WTC11 (cell line): ENCODE measurements at regions of chr19 and their contacts with region 1.

Region 1: DNA sequence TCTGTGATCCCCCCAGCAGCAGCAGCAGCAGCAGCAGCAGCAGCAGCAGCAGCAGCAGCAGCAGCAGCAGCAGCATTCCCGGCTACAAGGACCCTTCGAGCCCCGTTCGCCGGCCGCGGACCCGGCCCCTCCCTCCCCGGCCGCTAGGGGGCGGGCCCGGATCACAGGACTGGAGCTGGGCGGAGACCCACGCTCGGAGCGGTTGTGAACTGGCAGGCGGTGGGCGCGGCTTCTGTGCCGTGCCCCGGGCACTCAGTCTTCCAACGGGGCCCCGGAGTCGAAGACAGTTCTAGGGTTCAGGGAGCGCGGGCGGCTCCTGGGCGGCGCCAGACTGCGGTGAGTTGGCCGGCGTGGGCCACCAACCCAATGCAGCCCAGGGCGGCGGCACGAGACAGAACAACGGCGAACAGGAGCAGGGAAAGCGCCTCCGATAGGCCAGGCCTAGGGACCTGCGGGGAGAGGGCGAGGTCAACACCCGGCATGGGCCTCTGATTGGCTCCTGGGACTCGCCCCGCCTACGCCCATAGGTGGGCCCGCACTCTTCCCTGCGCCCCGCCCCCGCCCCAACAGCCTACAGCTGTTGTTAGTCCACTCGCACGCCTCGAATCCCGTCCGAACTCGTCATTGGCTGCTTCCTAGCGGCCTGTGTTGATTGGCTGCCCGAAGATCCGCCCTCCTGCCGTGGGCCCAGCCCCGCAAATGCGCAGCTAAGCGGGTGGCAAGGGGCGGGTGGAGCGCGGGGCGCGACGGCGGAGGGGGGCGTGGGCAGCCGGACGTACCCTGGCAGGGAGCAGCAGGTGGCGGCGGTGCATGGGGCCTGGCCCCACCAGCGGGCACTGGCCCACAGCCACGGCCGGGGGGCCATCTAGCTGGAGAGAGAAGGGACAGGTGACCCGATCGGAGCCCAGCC is 1.4 kb upstream of the SIX5 start:
- DNase-seq: peak; percentile 97
- ATAC-seq: peak; percentile 73
- H3K4me3 Mint-ChIP-seq: peak overlapping the region; percentile 97
- H3K27ac Mint-ChIP-seq: peak overlapping the region; percentile 97
- H3K4me1 Mint-ChIP-seq: peaks cover 13% of the 10 kb centered on the region
- H3K27me3 Mint-ChIP-seq: peaks cover 5% of the 10 kb centered on the region; the same call in 1 of the 2 replicates
- CTCF ChIP-seq: peak; percentile 98

Region 2: GRCh38 chr19:45670670-45671453 is 99.6 kb before region 1 on chr19:
- CTCF ChIA-PET with region 1: interaction called, 17 read pairs
- POLR2A ChIA-PET with region 1: interaction called, 3 read pairs
- DNase-seq: peak; percentile 98
- ATAC-seq: peak; percentile 90
- H3K4me3 Mint-ChIP-seq: peak overlapping the region; percentile 73
- H3K27ac Mint-ChIP-seq: no peak overlapping the region
- H3K4me1 Mint-ChIP-seq: peaks cover 27% of the 10 kb centered on the region
- H3K27me3 Mint-ChIP-seq: peaks cover 72% of the 10 kb centered on the region
- CTCF ChIP-seq: no peak

Region 3: DNA sequence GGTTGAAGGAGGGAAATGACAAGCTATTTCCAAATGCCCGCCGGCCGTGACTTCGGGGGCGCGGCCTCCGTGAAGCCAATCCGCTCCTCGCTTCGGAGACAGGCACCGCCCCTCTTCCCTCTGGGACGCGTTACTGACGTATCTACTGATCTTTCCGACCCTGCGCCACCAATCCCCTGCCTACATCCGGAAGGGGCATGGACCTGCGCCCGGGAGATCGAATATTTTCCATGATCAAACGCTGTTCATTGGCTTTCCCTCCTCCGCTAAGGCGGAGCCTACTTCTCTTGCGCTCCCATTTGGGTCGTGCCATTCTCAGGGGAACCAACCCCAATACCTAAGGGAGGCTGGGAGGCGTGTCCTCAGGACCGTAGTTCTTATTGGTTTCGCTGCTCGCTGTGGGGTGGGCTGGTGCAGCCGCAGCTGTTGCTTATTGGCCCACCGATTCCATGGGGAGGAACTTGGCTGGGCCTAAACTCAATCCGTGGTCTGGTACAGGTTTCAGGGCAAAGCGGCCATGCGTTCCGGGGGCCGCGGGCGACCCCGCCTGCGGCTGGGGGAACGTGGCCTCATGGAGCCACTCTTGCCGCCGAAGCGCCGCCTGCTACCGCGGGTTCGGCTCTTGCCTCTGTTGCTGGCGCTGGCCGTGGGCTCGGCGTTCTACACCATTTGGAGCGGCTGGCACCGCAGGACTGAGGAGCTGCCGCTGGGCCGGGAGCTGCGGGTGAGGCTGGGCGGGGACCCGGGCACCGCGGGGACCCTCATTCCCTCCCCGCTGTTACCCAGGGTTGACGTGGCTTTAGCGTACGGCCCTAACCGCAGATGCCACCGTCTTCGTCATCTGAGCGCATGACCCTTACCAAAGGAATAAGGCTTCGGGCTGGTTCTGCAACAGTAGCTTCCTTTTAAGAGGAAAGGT is 78.0 kb before region 1 on chr19 and contains the start of gene QPCTL:
- CTCF ChIA-PET with region 1: interaction called, 40 read pairs
- POLR2A ChIA-PET with region 1: interaction called, 39 read pairs
- DNase-seq: peak; percentile 97
- ATAC-seq: peak; percentile 95
- H3K4me3 Mint-ChIP-seq: peak within 1 kb of the TSS; percentile 96
- H3K27ac Mint-ChIP-seq: peak within 1 kb of the TSS; percentile 100
- H3K4me1 Mint-ChIP-seq: peaks cover 6% of the 10 kb centered on the region; the same call in 1 of the 2 replicates
- H3K27me3 Mint-ChIP-seq: peaks cover 3% of the 10 kb centered on the region; the same call in 1 of the 2 replicates
- CTCF ChIP-seq: no peak
- total RNA-seq, gene QPCTL: 23.8 to 33.3 TPM (median 27.5 TPM) in 3 replicates

Region 4: GRCh38 chr19:45717166-45717982 is 53.1 kb before region 1 on chr19:
- CTCF ChIA-PET with region 1: interaction called, 80 read pairs
- POLR2A ChIA-PET with region 1: interaction called, 115 read pairs
- DNase-seq: peak; percentile 99
- ATAC-seq: peak; percentile 98
- H3K4me3 Mint-ChIP-seq: peak overlapping the region; percentile 97
- H3K27ac Mint-ChIP-seq: peak overlapping the region; percentile 97
- H3K4me1 Mint-ChIP-seq: peaks cover 25% of the 10 kb centered on the region
- H3K27me3 Mint-ChIP-seq: no peaks in the 10 kb centered on the region; the same call in 1 of the 2 replicates
- CTCF ChIP-seq: no peak

Region 5: GRCh38 chr19:45753546-45753945 is 16.9 kb before region 1 on chr19:
- CTCF ChIA-PET with region 1: interaction called, 93 read pairs
- POLR2A ChIA-PET with region 1: interaction called, 20 read pairs
- DNase-seq: peak; percentile 73
- ATAC-seq: peak; percentile 95
- H3K4me3 Mint-ChIP-seq: no peak overlapping the region
- H3K27ac Mint-ChIP-seq: no peak overlapping the region
- H3K4me1 Mint-ChIP-seq: peaks cover 3% of the 10 kb centered on the region
- H3K27me3 Mint-ChIP-seq: peaks cover 12% of the 10 kb centered on the region
- CTCF ChIP-seq: no peak

Region 6: DNA sequence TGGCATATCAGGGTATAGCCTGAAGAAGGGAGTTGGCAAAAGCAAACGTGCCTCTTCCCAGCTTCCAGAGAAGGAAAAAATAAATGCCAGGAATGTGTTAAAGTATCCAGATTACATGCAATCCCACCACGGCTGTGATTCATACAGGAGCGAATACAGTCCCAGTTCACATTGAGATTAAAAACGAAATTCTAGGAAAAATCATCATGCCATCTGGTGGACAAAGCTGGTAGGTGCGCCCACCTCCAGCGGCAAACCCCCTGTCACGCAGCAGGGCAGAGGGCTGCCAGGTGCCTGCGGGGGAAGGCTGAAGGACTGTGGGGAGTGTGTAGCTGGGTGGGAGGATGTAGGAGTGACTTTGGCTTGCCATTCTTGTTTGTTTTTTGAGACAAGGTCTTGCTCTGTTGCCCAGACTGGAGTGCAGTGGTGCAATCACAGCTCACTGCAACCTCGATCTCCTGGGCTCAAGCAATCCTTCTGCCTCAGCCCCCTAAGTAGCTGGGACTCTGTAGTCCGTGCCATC is 28.6 kb after region 1 on chr19:
- CTCF ChIA-PET with region 1: interaction called, 73 read pairs
- POLR2A ChIA-PET with region 1: interaction called, 5 read pairs
- DNase-seq: peak; percentile 75
- ATAC-seq: peak; percentile 86
- H3K4me3 Mint-ChIP-seq: no peak overlapping the region; the same call in 1 of the 2 replicates
- H3K27ac Mint-ChIP-seq: no peak overlapping the region
- H3K4me1 Mint-ChIP-seq: peaks cover 6% of the 10 kb centered on the region
- H3K27me3 Mint-ChIP-seq: peaks cover 57% of the 10 kb centered on the region
- CTCF ChIP-seq: peak; percentile 71

Region 7: DNA sequence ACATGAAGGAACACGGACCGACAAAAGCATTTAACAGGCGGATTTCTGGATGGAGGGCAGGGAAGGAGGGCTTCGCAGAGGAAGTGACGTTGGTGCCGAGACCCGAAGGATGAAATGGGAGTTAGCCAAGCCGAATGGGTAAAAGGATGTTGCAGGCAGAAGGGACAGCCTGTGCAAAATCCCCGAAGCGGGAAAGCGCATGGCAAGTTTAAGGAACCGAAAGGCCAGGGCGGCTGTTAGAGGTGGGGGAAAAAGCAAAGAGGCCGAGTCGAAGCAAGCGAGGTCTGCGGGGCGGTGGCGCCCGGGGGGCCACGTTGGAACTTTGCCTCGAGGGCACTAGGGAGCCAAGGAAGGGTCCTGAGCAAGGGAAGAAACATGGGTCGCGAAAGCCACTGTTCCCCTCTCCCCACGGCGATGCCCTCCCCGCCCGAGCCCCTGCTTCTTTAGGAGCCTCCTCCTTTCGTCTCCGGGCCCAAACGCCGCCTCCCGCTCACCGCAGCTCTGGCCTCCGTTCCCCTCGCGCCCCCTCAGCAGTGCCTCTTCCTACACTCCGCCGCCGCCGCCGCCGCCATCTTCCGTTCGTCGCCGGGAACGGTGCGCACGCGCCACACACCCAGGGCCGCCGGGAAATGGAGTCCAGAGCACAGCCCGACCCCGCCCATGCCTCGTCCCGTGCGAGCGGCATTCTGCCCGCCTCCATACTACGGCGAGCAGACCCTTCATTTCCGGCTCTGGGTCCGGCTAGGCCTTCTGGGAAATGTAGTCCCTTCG is 92.3 kb after region 1 on chr19 and contains the start of gene SYMPK:
- CTCF ChIA-PET with region 1: interaction called, 19 read pairs
- POLR2A ChIA-PET with region 1: interaction called, 12 read pairs
- DNase-seq: peak; percentile 99
- ATAC-seq: peak; percentile 93
- H3K4me3 Mint-ChIP-seq: peak within 1 kb of the TSS; percentile 89
- H3K27ac Mint-ChIP-seq: peak within 1 kb of the TSS; percentile 99
- H3K4me1 Mint-ChIP-seq: peaks cover 40% of the 10 kb centered on the region
- H3K27me3 Mint-ChIP-seq: no peaks in the 10 kb centered on the region
- CTCF ChIP-seq: no peak
- total RNA-seq, gene SYMPK: 105 to 111 TPM (median 106 TPM) in 3 replicates